ENCODE measurements at regions of chr5 and their contacts with region 1.

Region 1: DNA sequence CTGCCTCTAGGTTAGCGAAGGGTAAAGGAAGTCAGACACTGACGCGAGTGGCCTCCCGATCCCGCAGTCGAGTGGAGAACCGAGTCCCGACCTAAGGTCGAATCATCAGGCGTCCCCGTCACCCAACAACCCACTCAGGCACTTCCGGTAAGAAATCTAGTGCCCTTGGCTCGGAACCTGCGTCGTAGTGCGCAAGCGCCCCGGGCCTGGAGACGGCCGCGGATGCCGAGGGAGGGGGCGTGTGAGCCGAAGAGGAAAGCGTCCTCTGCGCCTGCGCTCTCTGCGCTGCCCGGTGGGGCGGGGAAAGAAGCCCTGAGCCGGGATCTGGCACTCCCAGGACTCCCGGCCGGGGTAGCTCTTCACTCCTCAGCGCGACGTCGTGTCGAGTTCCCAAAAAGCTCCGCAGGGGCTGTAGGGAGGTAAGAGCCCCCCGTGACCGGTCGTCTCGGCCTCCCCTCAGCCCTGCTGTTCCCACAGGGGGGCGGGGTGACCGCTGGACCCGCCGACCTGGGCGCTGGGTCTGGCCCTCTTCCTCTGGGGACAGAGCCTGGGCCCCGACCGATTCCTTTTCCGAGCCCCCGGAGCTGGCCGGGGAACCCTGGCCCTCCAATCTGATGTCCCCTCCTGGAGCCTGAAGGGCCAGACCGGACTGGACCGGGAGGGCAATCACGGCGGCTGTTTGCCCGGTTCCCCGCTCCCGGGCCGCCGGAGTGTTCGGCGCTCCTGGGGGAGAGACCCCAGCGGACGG is at the start of gene ZFYVE16:
- DNase-seq: peak; percentile 95 to 98 (median 98)
- H3K4me3 ChIP-seq: peak within 1 kb of the TSS; percentile 63 to 100 (median 92)
- H3K27ac ChIP-seq: peak within 1 kb of the TSS; percentile 88 to 100 (median 99)
- H3K27me3 ChIP-seq: no peaks in the 10 kb centered on the region
- CTCF ChIP-seq: peak in 28 of 56 donors; percentile 4 to 54 (median 31)
- total RNA-seq, gene ZFYVE16: 59.0 to 215 (median 92.5) TPM

Region 2: DNA sequence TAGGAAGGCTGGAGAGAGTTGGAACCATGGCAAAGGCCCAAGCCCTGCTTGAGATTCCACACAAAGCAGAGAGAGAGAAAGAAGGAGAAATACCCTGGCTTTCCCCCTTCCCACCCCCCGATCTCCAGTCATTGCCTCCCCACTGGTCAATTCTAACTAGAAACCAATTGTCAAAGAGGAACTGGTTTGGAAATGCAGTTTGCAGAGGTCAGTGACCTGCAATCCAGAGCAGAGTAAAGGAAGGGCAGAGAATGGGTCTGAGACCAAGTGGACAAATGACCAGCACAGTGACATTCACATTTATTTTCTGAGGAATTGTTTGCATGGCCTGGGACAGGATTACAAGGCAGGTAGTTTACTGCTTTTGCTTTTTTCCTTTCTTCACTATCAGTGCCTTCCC is 37.5 kb before region 1 on chr5:
- intact Hi-C with region 1: loop called (anchors 2 to 5 kb)
- DNase-seq: no peak
- H3K4me3 ChIP-seq: no peak overlapping the region
- H3K27ac ChIP-seq: peak overlapping the region in 49 of 59 donors; percentile 2 to 91 (median 60)
- H3K27me3 ChIP-seq: no peaks in the 10 kb centered on the region
- CTCF ChIP-seq: no peak